Activated CD4-positive, alpha-beta T cell treated with anti-CD3 and anti-CD28 coated beads for 36 hours (primary cell): ENCODE measurements at regions of chr10 and their contacts with region 1.

Region 1: DNA sequence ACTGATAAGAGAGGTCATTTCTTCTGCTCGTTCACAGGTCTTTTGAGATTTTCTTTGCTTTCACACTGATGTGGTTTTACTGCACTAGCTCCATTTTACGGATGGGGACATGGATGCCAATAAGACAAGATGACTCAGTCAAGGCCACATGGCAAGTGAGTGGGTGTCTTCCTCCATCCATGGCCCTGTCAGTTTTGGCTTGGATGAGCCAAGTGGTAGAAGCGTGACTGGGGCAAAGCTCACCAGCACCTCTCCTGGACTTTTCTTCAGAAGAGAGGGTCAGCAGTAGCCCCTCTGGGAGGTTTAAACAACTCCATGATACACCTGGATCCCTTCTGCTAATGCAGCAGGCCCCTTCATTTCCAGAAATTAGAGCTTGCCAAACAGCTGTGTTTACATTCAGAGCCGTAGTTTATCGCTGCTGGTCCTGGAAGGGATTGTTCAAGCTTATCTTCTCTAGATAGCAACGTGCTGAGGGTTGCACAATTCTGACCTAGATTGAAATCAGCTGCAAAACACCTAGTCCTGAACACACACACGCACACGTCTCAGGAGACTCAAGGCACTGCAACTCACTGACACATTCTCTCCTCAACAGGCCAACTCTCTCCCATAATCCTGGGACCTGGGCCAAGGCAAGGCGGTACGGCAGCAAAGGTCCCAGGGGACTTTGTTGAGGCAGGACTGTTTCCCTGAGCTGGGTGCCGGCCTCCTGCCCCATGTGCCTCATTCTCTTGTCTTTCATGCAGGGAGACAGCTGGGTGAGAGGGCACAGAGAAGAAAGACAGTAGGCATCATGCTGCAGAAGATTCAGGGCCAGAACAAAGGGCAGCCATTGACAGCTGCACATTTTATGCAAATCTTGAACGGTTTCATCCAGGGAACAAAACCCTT is 14.2 kb upstream of the PDCD4 start:
- DNase-seq: peak; percentile 53
- ATAC-seq: peak; percentile 57
- H3K4me3 Mint-ChIP-seq: no peak overlapping the region
- H3K27ac Mint-ChIP-seq: peak overlapping the region; percentile 84
- H3K4me1 Mint-ChIP-seq: peaks cover 83% of the 10 kb centered on the region
- H3K27me3 Mint-ChIP-seq: no peaks in the 10 kb centered on the region

Region 2: DNA sequence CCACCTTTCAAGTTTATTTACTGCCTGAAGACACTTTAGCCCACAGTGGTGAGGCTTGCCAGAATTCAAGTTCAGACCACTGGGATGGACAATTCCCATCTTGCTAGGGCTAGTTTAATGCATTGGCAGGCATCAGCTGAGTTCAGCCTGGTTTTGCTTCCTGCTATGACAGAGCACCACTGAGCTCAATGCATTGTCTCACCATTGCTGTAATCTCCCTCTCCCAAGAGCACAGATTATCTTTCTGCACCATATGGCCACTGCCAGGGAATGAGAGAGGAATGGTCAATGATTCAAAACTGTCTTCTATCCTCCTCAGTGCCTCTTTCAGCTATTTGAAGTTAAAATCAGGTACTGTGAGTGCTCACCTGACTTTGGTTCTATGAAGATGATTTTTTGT is 1095.0 kb before region 1 on chr10:
- CTCF ChIA-PET with region 1: no interaction called
- POLR2A ChIA-PET with region 1: no interaction called
- intact Hi-C with region 1: no loop called
- DNase-seq: no peak
- ATAC-seq: no peak
- H3K4me3 Mint-ChIP-seq: no peak overlapping the region
- H3K27ac Mint-ChIP-seq: no peak overlapping the region
- H3K4me1 Mint-ChIP-seq: no peaks in the 10 kb centered on the region
- H3K27me3 Mint-ChIP-seq: peaks cover 4% of the 10 kb centered on the region

Region 3: DNA sequence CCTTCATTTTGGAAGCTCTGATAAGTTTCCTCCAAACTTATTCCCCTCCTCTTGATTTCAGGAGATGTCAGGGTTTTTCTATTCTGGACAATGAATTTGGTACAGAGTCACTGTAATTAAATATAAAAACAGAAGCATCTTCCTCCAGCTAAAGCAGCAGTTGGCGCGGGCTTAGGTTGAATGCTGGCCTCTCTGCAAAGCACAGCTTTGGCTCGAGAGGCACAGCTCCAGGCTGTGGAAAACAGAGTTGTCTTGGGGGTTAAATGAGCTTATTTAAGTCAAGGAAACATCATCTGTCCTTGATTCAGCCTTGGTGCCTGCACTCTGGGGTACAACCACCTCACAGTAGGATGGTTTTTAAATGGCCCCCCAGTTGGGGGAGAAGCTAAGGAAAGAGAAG is 20.8 kb before region 1 on chr10:
- CTCF ChIA-PET with region 1: interaction called, 11 read pairs
- POLR2A ChIA-PET with region 1: no interaction called
- intact Hi-C with region 1: no loop called
- DNase-seq: no peak
- ATAC-seq: no peak
- H3K4me3 Mint-ChIP-seq: no peak overlapping the region
- H3K27ac Mint-ChIP-seq: no peak overlapping the region
- H3K4me1 Mint-ChIP-seq: peaks cover 37% of the 10 kb centered on the region
- H3K27me3 Mint-ChIP-seq: no peaks in the 10 kb centered on the region

Region 4: GRCh38 chr10:110843031-110843430 is 14.5 kb before region 1 on chr10:
- CTCF ChIA-PET with region 1: interaction called, 11 read pairs
- POLR2A ChIA-PET with region 1: no interaction called
- intact Hi-C with region 1: no loop called
- DNase-seq: peak; percentile 58
- ATAC-seq: peak; percentile 88
- H3K4me3 Mint-ChIP-seq: no peak overlapping the region
- H3K27ac Mint-ChIP-seq: peak overlapping the region; percentile 87
- H3K4me1 Mint-ChIP-seq: peaks cover 34% of the 10 kb centered on the region
- H3K27me3 Mint-ChIP-seq: no peaks in the 10 kb centered on the region

Region 5: DNA sequence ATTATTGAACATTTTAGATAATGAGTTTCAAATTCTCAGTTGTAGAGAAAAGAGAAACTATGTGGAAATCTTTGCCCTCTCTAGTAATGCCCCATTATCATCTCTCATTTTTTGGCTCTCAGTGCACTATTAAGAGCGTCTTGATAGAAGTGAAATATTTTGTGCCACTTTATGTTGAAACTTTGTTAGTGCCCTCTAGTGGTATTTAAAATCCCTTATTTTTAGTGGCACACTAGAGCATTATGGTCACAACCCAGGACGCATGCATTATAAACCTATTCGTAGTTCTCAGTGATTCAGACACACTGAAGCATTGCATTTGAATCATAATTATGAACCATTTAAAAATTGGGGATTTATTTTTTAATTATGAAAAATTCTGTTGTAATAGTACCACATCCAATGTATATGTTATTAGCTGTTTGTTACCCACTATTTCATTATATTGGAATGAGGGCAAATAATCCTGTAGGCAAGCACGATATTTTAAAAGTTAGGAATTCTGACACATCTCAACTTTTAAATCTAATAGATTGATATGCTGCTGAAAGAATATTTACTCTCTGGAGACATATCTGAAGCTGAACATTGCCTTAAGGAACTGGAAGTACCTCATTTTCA is 36.2 kb after region 1 on chr10:
- CTCF ChIA-PET with region 1: interaction called, 10 read pairs
- POLR2A ChIA-PET with region 1: no interaction called
- intact Hi-C with region 1: no loop called
- DNase-seq: no peak
- ATAC-seq: peak; percentile 87
- H3K4me3 Mint-ChIP-seq: no peak overlapping the region
- H3K27ac Mint-ChIP-seq: no peak overlapping the region
- H3K4me1 Mint-ChIP-seq: peaks cover 33% of the 10 kb centered on the region
- H3K27me3 Mint-ChIP-seq: no peaks in the 10 kb centered on the region

Region 6: DNA sequence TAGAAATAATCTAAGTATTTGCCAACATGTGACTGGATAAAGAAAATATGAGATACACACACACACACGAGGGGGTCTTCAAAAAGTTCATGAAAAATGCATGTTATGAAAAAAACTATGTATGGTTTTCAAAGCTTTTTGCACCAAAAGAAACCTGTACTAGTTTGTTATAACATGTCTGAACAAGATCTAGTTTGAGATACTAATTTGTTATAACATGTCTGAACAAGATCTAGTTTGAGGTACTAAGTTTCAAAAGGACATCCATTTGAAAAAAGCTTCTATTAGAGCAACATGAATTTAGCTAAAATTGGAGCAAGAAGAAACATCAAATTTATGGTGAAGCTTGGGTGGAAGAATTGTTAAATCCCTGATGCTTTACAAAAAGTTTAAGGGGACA is 199.5 kb after region 1 on chr10:
- CTCF ChIA-PET with region 1: no interaction called
- POLR2A ChIA-PET with region 1: no interaction called
- intact Hi-C with region 1: no loop called
- DNase-seq: no peak
- ATAC-seq: no peak
- H3K4me3 Mint-ChIP-seq: no peak overlapping the region
- H3K27ac Mint-ChIP-seq: no peak overlapping the region
- H3K4me1 Mint-ChIP-seq: no peaks in the 10 kb centered on the region
- H3K27me3 Mint-ChIP-seq: peaks cover 22% of the 10 kb centered on the region

Region 7: GRCh38 chr10:111879969-111880368 is 1022.5 kb after region 1 on chr10:
- CTCF ChIA-PET with region 1: no interaction called
- POLR2A ChIA-PET with region 1: no interaction called
- intact Hi-C with region 1: no loop called
- DNase-seq: no peak
- ATAC-seq: no peak
- H3K4me3 Mint-ChIP-seq: no peak overlapping the region
- H3K27ac Mint-ChIP-seq: no peak overlapping the region
- H3K4me1 Mint-ChIP-seq: no peaks in the 10 kb centered on the region
- H3K27me3 Mint-ChIP-seq: no peaks in the 10 kb centered on the region